CD4-positive, alpha-beta memory T cell (primary cell): ENCODE measurements at regions of chr17 and their contacts with region 1.

Region 1: DNA sequence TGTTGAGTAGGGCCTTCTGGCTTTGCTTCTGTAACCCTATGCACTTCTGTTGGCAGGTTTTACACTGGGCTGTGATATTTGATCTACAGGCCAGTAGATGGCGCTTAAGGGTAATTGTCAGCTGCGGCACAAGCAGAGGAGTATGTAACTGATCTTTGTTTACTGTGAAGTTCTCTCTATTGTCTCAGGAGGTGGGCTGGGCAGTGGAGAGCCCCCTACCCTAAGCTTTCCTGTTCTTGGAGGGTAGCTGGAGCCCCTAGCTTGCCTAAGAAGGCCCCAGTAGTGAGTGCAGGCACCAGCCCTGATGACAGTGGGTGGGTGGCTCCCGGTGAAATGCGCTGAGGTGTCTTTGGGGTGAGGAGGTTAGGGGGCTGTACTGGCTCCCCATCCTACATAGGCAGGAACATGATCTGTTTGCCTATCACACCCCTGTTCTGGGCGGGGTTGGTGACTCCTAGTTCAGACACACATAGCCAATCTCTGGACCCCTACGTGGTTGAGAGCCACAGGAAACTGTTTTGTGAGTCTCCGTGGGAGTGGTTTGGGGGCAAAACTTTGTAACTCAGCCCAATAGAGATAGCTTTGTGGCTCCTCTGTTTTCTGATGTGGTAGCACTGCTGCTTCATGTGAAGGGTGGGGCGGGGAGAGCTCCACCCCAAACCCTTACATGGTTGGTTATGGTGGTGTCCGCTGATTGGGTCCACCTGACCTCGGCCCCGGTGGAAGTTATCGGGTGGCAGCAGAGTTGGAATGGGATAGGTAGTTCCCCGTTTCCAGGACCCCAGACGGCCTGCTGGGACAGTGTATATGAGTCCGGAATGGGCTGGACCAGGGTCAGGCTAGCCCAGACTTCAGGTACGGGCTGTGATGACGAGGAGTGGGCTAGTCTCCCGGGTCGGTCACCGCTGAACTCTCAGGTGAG is 60.4 kb downstream of the SLFN11 start:
- DNase-seq: peak; percentile 89 to 98 (median 90)
- H3K4me3 ChIP-seq: peak overlapping the region; percentile 7 to 60
- H3K4me3 Mint-ChIP-seq: peak overlapping the region; percentile 89 to 98 (median 94)
- H3K27ac ChIP-seq: peak overlapping the region; percentile 60
- H3K27ac Mint-ChIP-seq: peak overlapping the region; percentile 89 to 100 (median 98)
- H3K4me1 ChIP-seq: peaks cover 31% of the 10 kb centered on the region
- H3K4me1 Mint-ChIP-seq: peaks cover 42 to 72% (median 58%) of the 10 kb centered on the region in 4 donors
- H3K27me3 ChIP-seq: no peaks in the 10 kb centered on the region
- H3K27me3 Mint-ChIP-seq: no peaks in the 10 kb centered on the region

Region 2: DNA sequence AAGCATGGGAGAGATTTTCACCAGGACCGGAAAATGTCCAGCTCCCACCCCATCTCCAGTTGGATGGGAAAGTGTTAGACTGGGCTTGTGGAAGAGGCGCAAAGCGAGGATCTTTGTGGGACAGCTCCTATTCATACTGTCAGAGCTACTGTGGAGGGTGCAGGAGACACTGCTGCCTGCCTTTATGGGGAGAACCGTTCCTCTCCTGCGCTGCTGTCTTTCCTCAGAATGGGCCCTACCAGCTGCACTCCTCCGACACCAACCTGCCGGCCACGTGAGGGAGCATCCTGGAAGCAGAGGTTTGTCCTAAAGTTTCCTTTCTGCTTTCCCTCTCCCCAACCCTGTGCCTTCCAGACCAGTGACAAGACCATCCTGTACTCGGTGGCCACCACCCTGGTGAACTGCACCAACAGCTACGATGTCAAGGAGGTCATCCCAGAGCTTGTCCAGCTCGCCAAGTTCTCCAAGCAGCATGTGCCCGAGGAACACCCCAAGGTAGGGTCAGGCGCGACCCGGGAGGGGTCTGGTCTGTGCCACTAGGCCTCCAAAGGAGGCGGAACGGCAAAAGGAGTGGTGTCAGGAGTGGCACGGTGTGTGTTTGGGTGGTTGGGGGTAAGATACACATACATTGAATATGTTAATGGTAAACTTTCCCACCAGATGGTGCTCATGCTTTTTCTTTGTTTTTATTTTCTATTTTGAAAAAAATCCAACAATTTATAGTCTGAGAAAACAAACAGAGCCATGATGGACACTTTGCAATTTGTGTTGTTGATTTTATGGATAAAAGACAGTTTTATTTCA is 141.9 kb before region 1 on chr17:
- CTCF ChIA-PET with region 1: interaction called, 18 read pairs
- POLR2A ChIA-PET with region 1: interaction called, 11 read pairs
- intact Hi-C with region 1: loop called (anchors 1 kb)
- DNase-seq: peak; percentile 41 to 75 (median 72)
- H3K4me3 ChIP-seq: peak overlapping the region in 1 of 2 donors; percentile 18
- H3K4me3 Mint-ChIP-seq: peak overlapping the region; percentile 51 to 81 (median 68)
- H3K27ac ChIP-seq: no peak overlapping the region
- H3K27ac Mint-ChIP-seq: peak overlapping the region; percentile 82 to 93 (median 91)
- H3K4me1 ChIP-seq: peaks cover 41% of the 10 kb centered on the region
- H3K4me1 Mint-ChIP-seq: peaks cover 32 to 60% (median 42%) of the 10 kb centered on the region in 4 donors
- H3K27me3 ChIP-seq: no peaks in the 10 kb centered on the region
- H3K27me3 Mint-ChIP-seq: no peaks in the 10 kb centered on the region

Region 3: GRCh38 chr17:35192708-35193107 is 120.3 kb before region 1 on chr17:
- CTCF ChIA-PET with region 1: no interaction called
- POLR2A ChIA-PET with region 1: no interaction called
- intact Hi-C with region 1: no loop called
- DNase-seq: no peak
- H3K4me3 ChIP-seq: no peak overlapping the region
- H3K4me3 Mint-ChIP-seq: peak overlapping the region in 1 of 8 donors; percentile 23
- H3K27ac ChIP-seq: no peak overlapping the region
- H3K27ac Mint-ChIP-seq: peak overlapping the region in 3 of 7 donors; percentile 19 to 66 (median 51)
- H3K4me1 ChIP-seq: peaks cover 20% of the 10 kb centered on the region
- H3K4me1 Mint-ChIP-seq: peaks cover 23 to 44% (median 29%) of the 10 kb centered on the region in 4 donors
- H3K27me3 ChIP-seq: no peaks in the 10 kb centered on the region
- H3K27me3 Mint-ChIP-seq: no peaks in the 10 kb centered on the region

Region 4: DNA sequence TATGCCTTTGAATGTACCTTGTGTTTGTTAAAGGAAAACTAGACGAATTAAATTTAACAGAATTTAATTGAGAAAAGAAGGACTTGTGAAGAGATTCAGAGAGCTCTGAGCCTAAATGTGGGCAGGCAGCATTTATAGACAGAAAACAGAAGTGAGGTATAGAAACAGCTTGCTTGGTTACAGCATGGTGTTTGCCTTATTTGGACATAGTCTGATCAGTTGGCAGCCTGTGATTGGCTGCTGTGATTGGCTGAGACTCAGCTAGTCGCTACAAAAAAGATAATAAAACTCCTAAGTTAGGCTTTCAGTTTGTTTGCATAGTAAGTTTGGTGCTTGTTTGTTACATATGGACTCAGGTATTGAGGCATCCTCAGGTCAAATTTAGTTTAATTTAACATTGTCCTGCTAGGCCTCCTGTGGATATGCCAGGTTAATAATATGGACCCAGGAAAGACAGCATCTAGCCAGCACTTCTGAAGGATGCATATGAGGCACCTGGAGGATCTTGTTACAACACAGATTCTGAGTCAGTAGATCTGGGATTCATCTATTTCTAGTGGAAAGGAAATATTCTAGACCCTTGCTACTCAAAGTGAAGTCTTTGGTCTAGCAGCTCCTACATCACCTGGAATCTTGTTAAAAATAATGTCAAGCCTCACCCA is 26.8 kb before region 1 on chr17:
- CTCF ChIA-PET with region 1: interaction called, 10 read pairs
- POLR2A ChIA-PET with region 1: interaction called, 7 read pairs
- intact Hi-C with region 1: no loop called
- DNase-seq: peak; percentile 17 to 44 (median 35)
- H3K4me3 ChIP-seq: no peak overlapping the region
- H3K4me3 Mint-ChIP-seq: peak overlapping the region in 4 of 8 donors; percentile 29 to 52 (median 45)
- H3K27ac ChIP-seq: no peak overlapping the region
- H3K27ac Mint-ChIP-seq: peak overlapping the region; percentile 67 to 92 (median 76)
- H3K4me1 ChIP-seq: peaks cover 20% of the 10 kb centered on the region
- H3K4me1 Mint-ChIP-seq: peaks cover 22 to 46% (median 31%) of the 10 kb centered on the region in 4 donors
- H3K27me3 ChIP-seq: no peaks in the 10 kb centered on the region
- H3K27me3 Mint-ChIP-seq: no peaks in the 10 kb centered on the region

Region 5: DNA sequence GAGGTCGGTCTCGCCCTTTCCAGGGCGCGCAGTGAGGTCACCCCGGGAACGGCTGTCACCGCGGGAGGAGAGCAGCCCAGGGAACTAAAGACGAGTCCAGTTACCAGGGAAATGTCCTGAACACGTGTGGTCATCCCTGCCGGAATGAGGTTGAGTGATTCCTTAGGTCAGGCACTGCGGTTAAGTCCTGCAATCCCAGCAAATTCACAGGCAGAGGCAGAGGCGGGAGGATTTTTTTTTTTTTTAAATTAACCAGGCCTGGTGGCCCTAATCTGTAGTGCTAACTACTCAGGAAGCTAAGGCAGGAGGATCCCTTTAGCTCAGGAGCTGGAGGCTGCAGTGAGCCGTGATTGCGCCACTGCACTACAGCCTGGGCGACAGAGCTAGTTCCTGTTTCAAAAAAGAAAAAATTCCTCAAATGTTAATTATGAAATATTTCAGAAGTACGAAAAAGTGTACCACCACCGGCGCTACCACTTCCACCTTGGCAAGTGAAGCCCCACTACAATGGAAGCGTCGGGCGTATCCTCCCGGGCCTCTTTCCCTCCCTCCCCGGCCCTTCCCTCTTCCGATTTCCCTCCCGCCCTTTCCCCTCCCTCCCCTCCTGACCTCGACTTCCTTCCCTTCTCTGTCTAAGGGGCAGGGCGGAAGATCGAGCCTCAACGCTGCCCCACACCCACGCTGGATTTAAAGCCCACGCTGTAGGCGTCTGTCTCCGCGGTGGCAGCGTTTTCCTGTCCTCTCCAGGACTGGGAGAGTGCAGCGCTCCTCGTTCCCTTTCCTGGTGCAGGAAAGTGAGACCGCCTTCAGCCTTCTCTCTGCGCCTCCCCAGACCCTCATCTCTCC is 33.1 kb after region 1 on chr17:
- CTCF ChIA-PET with region 1: interaction called, 4 read pairs
- POLR2A ChIA-PET with region 1: interaction called, 12 read pairs
- intact Hi-C with region 1: loop called (anchors 2 kb)
- DNase-seq: peak; percentile 15 to 48 (median 41)
- H3K4me3 ChIP-seq: peak overlapping the region; percentile 61 to 81
- H3K4me3 Mint-ChIP-seq: peak overlapping the region; percentile 90 to 98 (median 94)
- H3K27ac ChIP-seq: peak overlapping the region; percentile 15
- H3K27ac Mint-ChIP-seq: peak overlapping the region; percentile 65 to 95 (median 88)
- H3K4me1 ChIP-seq: peaks cover 46% of the 10 kb centered on the region
- H3K4me1 Mint-ChIP-seq: peaks cover 40 to 76% (median 53%) of the 10 kb centered on the region in 4 donors
- H3K27me3 ChIP-seq: no peaks in the 10 kb centered on the region
- H3K27me3 Mint-ChIP-seq: no peaks in the 10 kb centered on the region

Region 6: GRCh38 chr17:35448214-35448898 is 135.3 kb after region 1 on chr17 and contains the start of gene SLFN13:
- CTCF ChIA-PET with region 1: interaction called, 7 read pairs
- POLR2A ChIA-PET with region 1: interaction called, 23 read pairs
- intact Hi-C with region 1: no loop called
- DNase-seq: peak; percentile 80 to 92 (median 81)
- H3K4me3 ChIP-seq: peak within 1 kb of the TSS; percentile 1 to 62
- H3K4me3 Mint-ChIP-seq: peak within 1 kb of the TSS; percentile 85 to 92 (median 88)
- H3K27ac ChIP-seq: peak within 1 kb of the TSS; percentile 55
- H3K27ac Mint-ChIP-seq: peak within 1 kb of the TSS; percentile 78 to 95 (median 89)
- H3K4me1 ChIP-seq: peaks cover 8% of the 10 kb centered on the region
- H3K4me1 Mint-ChIP-seq: peaks cover 6 to 18% (median 11%) of the 10 kb centered on the region in 4 donors
- H3K27me3 ChIP-seq: no peaks in the 10 kb centered on the region
- H3K27me3 Mint-ChIP-seq: no peaks in the 10 kb centered on the region
- total RNA-seq, gene SLFN13: 24.6 to 27.3 TPM

Region 7: DNA sequence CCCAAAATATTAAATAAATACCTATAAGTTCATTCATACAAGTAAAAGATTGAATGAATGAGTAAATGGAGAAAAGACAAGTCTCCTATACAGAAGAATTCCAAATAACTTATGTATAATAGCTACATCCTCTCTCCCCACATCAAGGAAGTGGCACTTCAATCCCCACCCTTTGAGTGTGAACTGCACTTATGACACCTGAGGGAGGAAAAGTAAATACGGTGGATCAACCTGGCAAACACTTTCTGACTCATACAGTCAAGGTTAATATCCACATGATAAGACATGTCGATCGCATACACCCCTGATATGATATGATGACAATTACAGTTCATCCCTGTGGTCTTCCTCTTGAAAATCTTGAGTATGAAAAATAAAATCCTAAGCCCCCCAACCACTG is 206.4 kb after region 1 on chr17:
- CTCF ChIA-PET with region 1: interaction called, 16 read pairs
- POLR2A ChIA-PET with region 1: interaction called, 18 read pairs
- intact Hi-C with region 1: no loop called
- DNase-seq: peak in 1 of 5 donors; percentile 57
- H3K4me3 ChIP-seq: peak overlapping the region in 1 of 2 donors; percentile 23
- H3K4me3 Mint-ChIP-seq: peak overlapping the region; percentile 17 to 83 (median 68)
- H3K27ac ChIP-seq: peak overlapping the region; percentile 0
- H3K27ac Mint-ChIP-seq: peak overlapping the region; percentile 27 to 91 (median 72)
- H3K4me1 ChIP-seq: peaks cover 74% of the 10 kb centered on the region
- H3K4me1 Mint-ChIP-seq: peaks cover 71 to 98% (median 86%) of the 10 kb centered on the region in 4 donors
- H3K27me3 ChIP-seq: no peaks in the 10 kb centered on the region
- H3K27me3 Mint-ChIP-seq: no peaks in the 10 kb centered on the region

Region 8: GRCh38 chr17:35747540-35748017 is 434.5 kb after region 1 on chr17:
- CTCF ChIA-PET with region 1: no interaction called
- POLR2A ChIA-PET with region 1: interaction called, 3 read pairs
- intact Hi-C with region 1: loop called (anchors 1 kb)
- DNase-seq: peak; percentile 72 to 76 (median 75)
- H3K4me3 ChIP-seq: no peak overlapping the region
- H3K4me3 Mint-ChIP-seq: no peak overlapping the region
- H3K27ac ChIP-seq: no peak overlapping the region
- H3K27ac Mint-ChIP-seq: no peak overlapping the region
- H3K4me1 ChIP-seq: no peaks in the 10 kb centered on the region
- H3K4me1 Mint-ChIP-seq: peaks cover 0 to 9% (median 2%) of the 10 kb centered on the region in 4 donors
- H3K27me3 ChIP-seq: peaks cover 27% of the 10 kb centered on the region
- H3K27me3 Mint-ChIP-seq: peaks cover 24 to 38% of the 10 kb centered on the region in 2 donors